Activated CD4-positive, alpha-beta T cell treated with anti-CD3 and anti-CD28 coated beads for 36 hours (primary cell): ENCODE measurements at regions of chr12 and their contacts with region 1.

Region 1: DNA sequence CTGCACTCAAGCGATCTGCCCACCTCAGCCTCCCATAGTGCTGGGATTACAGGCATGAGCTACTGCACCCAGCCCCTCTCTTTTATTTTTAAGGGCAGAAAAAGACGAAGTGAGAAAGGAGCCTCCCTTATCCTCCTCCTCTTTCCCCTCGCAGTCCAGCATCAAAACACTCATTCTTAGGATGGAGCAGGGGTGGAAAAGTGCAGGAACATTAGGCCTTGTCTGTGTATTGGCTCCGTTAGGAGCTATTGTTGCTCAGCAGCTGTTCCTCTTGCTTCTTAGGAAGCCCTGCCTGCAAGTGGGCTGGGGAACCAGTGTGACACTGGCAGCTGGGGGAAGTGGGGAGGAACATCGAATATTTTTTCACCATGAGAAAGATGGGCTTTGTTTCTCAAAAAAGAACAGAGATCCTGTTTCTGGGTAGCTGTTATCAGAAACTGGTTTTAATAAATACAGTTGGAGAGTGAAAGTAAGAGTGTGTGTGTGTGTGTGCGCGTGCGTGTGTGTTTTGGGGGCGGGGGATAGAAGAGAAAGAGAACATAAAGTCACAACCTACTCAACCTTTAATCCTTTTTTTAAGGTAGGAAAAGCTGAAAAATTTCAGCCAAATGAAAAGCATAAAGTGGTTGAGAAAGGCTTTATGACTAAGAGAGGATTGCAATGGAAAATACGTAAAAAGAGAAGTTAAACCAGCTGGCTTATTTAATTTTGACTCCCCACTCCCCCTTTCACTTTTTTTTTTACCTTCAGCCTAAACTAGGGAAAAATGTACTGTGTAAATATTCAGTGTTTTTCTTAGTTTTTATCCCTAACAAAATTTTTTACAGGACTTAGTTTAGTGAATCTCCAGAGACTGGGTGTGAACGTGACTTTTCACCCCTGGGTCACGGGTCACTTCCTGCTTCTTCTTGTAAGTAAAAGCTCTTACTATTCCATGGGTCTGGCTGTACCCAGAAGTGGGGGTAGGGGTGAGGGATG is 197.2 kb upstream of the PLEKHG7 start:
- DNase-seq: peak; percentile 77
- ATAC-seq: peak; percentile 56
- H3K4me3 Mint-ChIP-seq: peak overlapping the region; percentile 72
- H3K27ac Mint-ChIP-seq: peak overlapping the region; percentile 99
- H3K4me1 Mint-ChIP-seq: peaks cover 50% of the 10 kb centered on the region
- H3K27me3 Mint-ChIP-seq: no peaks in the 10 kb centered on the region

Region 2: GRCh38 chr12:91778938-91779400 is 726.6 kb before region 1 on chr12:
- CTCF ChIA-PET with region 1: no interaction called
- POLR2A ChIA-PET with region 1: no interaction called
- intact Hi-C with region 1: loop called in 1 of 2 experiments (anchors 10 kb)
- DNase-seq: peak; percentile 63
- ATAC-seq: peak; percentile 91
- H3K4me3 Mint-ChIP-seq: peak overlapping the region; percentile 46
- H3K27ac Mint-ChIP-seq: peak overlapping the region; percentile 81
- H3K4me1 Mint-ChIP-seq: peaks cover 42% of the 10 kb centered on the region
- H3K27me3 Mint-ChIP-seq: no peaks in the 10 kb centered on the region

Region 3: GRCh38 chr12:92208613-92209121 is 296.9 kb before region 1 on chr12:
- CTCF ChIA-PET with region 1: no interaction called
- POLR2A ChIA-PET with region 1: no interaction called
- intact Hi-C with region 1: loop called in 1 of 2 experiments (anchors 10 kb)
- DNase-seq: peak; percentile 40
- ATAC-seq: peak; percentile 77
- H3K4me3 Mint-ChIP-seq: peak overlapping the region; percentile 67
- H3K27ac Mint-ChIP-seq: peak overlapping the region; percentile 81
- H3K4me1 Mint-ChIP-seq: peaks cover 32% of the 10 kb centered on the region
- H3K27me3 Mint-ChIP-seq: no peaks in the 10 kb centered on the region

Region 4: DNA sequence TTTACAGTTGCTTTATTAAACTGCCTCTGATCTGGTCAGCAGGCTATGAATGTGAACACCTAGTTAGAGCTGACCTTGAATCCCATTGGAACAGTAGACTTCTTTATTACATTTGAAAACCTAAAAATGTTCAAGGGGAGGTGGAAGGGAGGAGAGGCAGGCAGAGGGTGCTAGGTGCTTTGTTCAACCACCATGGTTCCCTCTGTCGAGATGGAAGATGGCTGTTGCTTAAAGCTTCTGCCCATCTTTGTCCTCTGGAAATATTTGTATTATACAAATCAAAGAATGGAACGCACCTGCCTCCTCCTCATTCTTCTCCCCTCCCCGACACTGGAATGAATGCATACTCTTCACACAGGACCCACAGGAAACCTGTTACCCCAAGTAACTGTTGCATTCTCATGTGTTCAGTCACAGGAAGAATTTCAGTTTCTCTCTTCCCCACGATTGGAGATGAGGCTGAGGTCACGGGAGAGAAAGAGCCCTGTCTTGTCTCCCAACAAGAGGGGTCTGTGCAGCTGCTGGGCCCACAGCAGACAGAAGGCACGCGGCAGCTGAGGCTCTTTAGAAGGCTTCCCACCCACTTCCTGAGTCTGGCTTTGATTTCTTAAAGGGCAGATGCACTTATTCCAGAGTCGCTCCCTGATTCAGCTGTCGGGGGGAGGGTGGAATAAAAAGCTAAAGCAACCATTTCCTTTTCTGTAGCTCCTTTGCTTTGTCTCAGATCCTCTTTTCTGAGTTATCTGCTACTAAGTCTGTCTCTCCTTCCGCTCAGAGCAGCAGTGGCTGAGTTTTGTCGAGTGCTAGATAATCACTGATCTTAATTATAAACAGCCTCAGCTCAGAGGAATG is 142.0 kb before region 1 on chr12:
- CTCF ChIA-PET with region 1: no interaction called
- POLR2A ChIA-PET with region 1: no interaction called
- intact Hi-C with region 1: loop called in 1 of 2 experiments (anchors 1 kb)
- DNase-seq: peak; percentile 52
- ATAC-seq: peak; percentile 57
- H3K4me3 Mint-ChIP-seq: peak overlapping the region; percentile 62
- H3K27ac Mint-ChIP-seq: peak overlapping the region; percentile 81
- H3K4me1 Mint-ChIP-seq: peaks cover 62% of the 10 kb centered on the region
- H3K27me3 Mint-ChIP-seq: no peaks in the 10 kb centered on the region

Region 5: GRCh38 chr12:92439407-92439779 is 66.2 kb before region 1 on chr12:
- CTCF ChIA-PET with region 1: no interaction called
- POLR2A ChIA-PET with region 1: no interaction called
- intact Hi-C with region 1: no loop called
- DNase-seq: no peak
- ATAC-seq: peak; percentile 56
- H3K4me3 Mint-ChIP-seq: no peak overlapping the region
- H3K27ac Mint-ChIP-seq: no peak overlapping the region
- H3K4me1 Mint-ChIP-seq: peaks cover 28% of the 10 kb centered on the region
- H3K27me3 Mint-ChIP-seq: no peaks in the 10 kb centered on the region

Region 6: GRCh38 chr12:92469837-92470236 is 35.7 kb before region 1 on chr12:
- CTCF ChIA-PET with region 1: interaction called, 9 read pairs
- POLR2A ChIA-PET with region 1: interaction called, 6 read pairs
- intact Hi-C with region 1: loop called (anchors 1 kb)
- DNase-seq: no peak
- ATAC-seq: no peak
- H3K4me3 Mint-ChIP-seq: no peak overlapping the region
- H3K27ac Mint-ChIP-seq: peak overlapping the region; percentile 85
- H3K4me1 Mint-ChIP-seq: peaks cover 48% of the 10 kb centered on the region
- H3K27me3 Mint-ChIP-seq: no peaks in the 10 kb centered on the region

Region 7: GRCh38 chr12:92539113-92539749 is 33.7 kb after region 1 on chr12:
- CTCF ChIA-PET with region 1: interaction called, 4 read pairs
- POLR2A ChIA-PET with region 1: interaction called, 3 read pairs
- intact Hi-C with region 1: loop called (anchors 1 kb)
- DNase-seq: peak; percentile 43
- ATAC-seq: peak; percentile 77
- H3K4me3 Mint-ChIP-seq: no peak overlapping the region
- H3K27ac Mint-ChIP-seq: peak overlapping the region; percentile 92
- H3K4me1 Mint-ChIP-seq: peaks cover 60% of the 10 kb centered on the region
- H3K27me3 Mint-ChIP-seq: no peaks in the 10 kb centered on the region

Region 8: GRCh38 chr12:92593734-92594402 is 88.3 kb after region 1 on chr12:
- CTCF ChIA-PET with region 1: interaction called, 3 read pairs
- POLR2A ChIA-PET with region 1: no interaction called
- intact Hi-C with region 1: loop called in 1 of 2 experiments (anchors 1 kb)
- DNase-seq: peak; percentile 83
- ATAC-seq: peak; percentile 95
- H3K4me3 Mint-ChIP-seq: peak overlapping the region; percentile 5
- H3K27ac Mint-ChIP-seq: peak overlapping the region; percentile 92
- H3K4me1 Mint-ChIP-seq: peaks cover 84% of the 10 kb centered on the region
- H3K27me3 Mint-ChIP-seq: no peaks in the 10 kb centered on the region